GM12878 (cell line): ENCODE measurements at regions of chr11 and their contacts with region 1.

Region 1: DNA sequence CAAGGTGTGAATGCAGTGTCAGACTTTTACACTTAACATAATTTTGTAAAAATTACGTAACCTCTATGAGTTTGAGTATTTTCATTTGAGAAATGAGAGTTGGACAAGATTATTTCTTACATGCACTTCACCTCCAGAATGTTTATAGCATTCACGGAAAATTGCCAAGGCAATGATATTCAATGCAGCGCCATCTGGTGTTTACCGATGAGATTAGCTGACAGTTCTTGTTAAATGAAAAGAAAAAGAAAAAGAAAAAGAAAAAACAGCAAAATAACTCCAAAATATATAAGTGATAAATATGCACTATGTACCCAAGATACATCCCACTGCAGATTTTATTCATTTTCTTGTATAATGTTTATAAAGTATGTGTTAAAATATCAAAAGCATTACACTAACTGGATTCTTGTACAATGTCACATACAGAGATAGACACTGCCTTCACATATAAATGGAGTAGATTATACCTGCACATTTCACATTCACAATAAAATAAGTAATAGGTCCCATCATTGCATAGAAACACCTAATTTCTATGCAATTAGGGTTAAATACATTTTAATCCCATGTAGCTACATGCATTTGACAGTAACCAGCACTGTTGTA is 976.3 kb upstream of the FAT3 start:
- DNase-seq: no peak
- ATAC-seq: peak; percentile 55; the same call in 2 of the 3 replicates
- H3K4me3 ChIP-seq: no peak overlapping the region
- H3K27ac ChIP-seq: no peak overlapping the region
- H3K4me1 ChIP-seq: no peaks in the 10 kb centered on the region
- H3K27me3 ChIP-seq: no peaks in the 10 kb centered on the region
- CTCF ChIP-seq: peak; percentile 56 to 60 (median 60)
- EP300 ChIP-seq: no peak
- POLR2A ChIP-seq: no peak
- RAD21 ChIP-seq: peak; percentile 64

Region 2: GRCh38 chr11:90243534-90243933 is 1004.8 kb before region 1 on chr11:
- CTCF ChIA-PET with region 1: no interaction called
- POLR2A ChIA-PET with region 1: no interaction called
- RAD21 ChIA-PET with region 1: no interaction called
- SMC1A ChIA-PET with region 1: no interaction called
- in situ Hi-C with region 1: no loop called
- intact Hi-C with region 1: loop called (anchors 10 kb)
- DNase-seq: no peak
- ATAC-seq: no peak
- H3K4me3 ChIP-seq: no peak overlapping the region
- H3K27ac ChIP-seq: no peak overlapping the region
- H3K4me1 ChIP-seq: no peaks in the 10 kb centered on the region
- H3K27me3 ChIP-seq: 0 out of 4 replicates have a peak, but pooled peaks cover 0 to 3% of the 10 kb centered on the region in 2 experiments
- CTCF ChIP-seq: no peak
- EP300 ChIP-seq: no peak
- POLR2A ChIP-seq: no peak
- RAD21 ChIP-seq: no peak

Region 3: DNA sequence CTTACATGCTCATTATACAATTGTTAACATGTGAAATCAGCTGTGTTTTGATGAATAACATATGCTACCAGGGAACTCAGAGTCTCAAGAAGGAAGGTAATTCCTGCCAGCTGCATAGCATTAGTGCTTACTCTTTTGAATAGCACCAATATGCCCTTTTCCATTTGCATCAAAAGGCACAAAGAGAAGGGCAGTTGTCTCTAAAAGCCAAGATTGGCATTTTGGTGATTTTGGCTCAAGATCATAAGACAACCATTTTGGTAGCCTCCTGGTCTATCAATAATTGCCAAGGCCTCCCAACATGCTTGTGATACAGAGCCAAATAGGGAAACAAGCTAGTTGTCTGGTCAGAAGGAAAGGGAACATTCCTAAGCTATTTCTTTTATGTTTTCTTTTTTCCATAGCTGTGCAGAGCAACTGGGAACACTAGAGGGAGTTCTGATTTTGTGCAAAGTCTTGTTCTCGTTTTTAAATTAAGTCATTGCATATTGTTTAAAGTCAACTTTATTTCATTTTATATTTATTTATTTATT is 608.8 kb before region 1 on chr11:
- CTCF ChIA-PET with region 1: interaction called, 12 read pairs
- POLR2A ChIA-PET with region 1: no interaction called
- RAD21 ChIA-PET with region 1: interaction called, 3 read pairs
- SMC1A ChIA-PET with region 1: interaction called, 11 read pairs
- in situ Hi-C with region 1: no loop called
- intact Hi-C with region 1: loop called (anchors 10 kb)
- DNase-seq: no peak
- ATAC-seq: no peak
- H3K4me3 ChIP-seq: no peak overlapping the region
- H3K27ac ChIP-seq: no peak overlapping the region
- H3K4me1 ChIP-seq: no peaks in the 10 kb centered on the region
- H3K27me3 ChIP-seq: no peaks in the 10 kb centered on the region
- CTCF ChIP-seq: peak in 2 of 3 experiments; percentile 29 to 37; a peak in 3 of 6 replicates
- EP300 ChIP-seq: no peak
- POLR2A ChIP-seq: no peak
- RAD21 ChIP-seq: peak; percentile 58

Region 4: GRCh38 chr11:91011503-91011902 is 236.8 kb before region 1 on chr11:
- CTCF ChIA-PET with region 1: no interaction called
- POLR2A ChIA-PET with region 1: no interaction called
- RAD21 ChIA-PET with region 1: no interaction called
- SMC1A ChIA-PET with region 1: no interaction called
- in situ Hi-C with region 1: no loop called
- intact Hi-C with region 1: no loop called
- DNase-seq: no peak
- ATAC-seq: no peak
- H3K4me3 ChIP-seq: no peak overlapping the region
- H3K27ac ChIP-seq: no peak overlapping the region
- H3K4me1 ChIP-seq: no peaks in the 10 kb centered on the region
- H3K27me3 ChIP-seq: no peaks in the 10 kb centered on the region
- CTCF ChIP-seq: no peak
- EP300 ChIP-seq: no peak
- POLR2A ChIP-seq: no peak
- RAD21 ChIP-seq: no peak